A673 (cell line): ENCODE measurements at regions of chr1 and their contacts with region 1.

Region 1: GRCh38 chr1:112488141-112488540 is 20.6 kb upstream of the WNT2B start:
- DNase-seq: no peak
- H3K4me3 ChIP-seq: no peak overlapping the region
- H3K27ac ChIP-seq: no peak overlapping the region
- H3K4me1 ChIP-seq: no peaks in the 10 kb centered on the region
- H3K27me3 ChIP-seq: no peaks in the 10 kb centered on the region
- CTCF ChIP-seq: no peak

Region 2: DNA sequence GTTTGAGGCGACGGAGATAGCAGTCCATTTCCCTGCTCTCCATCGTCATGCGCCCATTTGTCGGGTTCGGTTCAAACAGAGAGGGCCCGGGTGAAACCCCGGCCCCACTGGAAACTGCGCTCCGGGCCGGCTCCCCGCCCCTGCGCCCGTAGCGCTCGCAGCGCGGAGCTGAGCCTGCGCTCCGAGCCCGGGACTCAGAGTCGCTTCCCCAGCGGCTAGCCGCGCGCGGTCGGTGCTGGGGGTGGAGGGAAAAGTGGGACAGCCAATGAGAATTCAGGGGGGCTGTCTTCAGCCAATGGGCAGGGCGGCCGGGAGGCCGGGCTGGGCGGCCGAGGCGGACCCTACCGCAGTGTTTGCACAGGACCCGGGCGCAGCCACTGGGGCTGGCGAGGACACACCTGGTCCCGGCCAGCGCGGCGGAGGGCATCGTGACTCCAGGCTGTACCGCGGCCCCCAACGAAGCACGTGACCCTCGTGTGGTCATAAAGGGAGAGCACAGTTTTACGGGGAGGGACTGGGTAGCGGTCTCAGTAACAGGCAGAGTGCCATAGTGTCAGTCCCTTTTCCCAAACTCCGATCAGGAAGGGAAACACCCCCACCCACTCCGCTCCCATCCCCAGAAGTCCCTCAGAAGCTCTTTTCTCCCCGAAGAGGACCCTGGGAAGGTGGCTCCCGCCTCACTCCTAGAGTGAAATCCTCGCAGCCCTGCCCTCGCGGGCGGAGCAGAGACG is 748.8 kb before region 1 on chr1 and contains the start of gene INKA2:
- CTCF ChIA-PET with region 1: no interaction called
- POLR2A ChIA-PET with region 1: no interaction called
- intact Hi-C with region 1: no loop called
- DNase-seq: peak; percentile 89
- H3K4me3 ChIP-seq: peak within 1 kb of the TSS; percentile 59
- H3K27ac ChIP-seq: peak within 1 kb of the TSS; percentile 70
- H3K4me1 ChIP-seq: peaks cover 37% of the 10 kb centered on the region
- H3K27me3 ChIP-seq: peaks cover 14% of the 10 kb centered on the region
- CTCF ChIP-seq: no peak
- total RNA-seq, gene INKA2: 0.62 and 0.74 TPM in 2 replicates

Region 3: GRCh38 chr1:112700290-112701226 is 212.4 kb after region 1 on chr1:
- CTCF ChIA-PET with region 1: no interaction called
- POLR2A ChIA-PET with region 1: interaction called, 10 read pairs
- intact Hi-C with region 1: no loop called
- DNase-seq: peak; percentile 94
- H3K4me3 ChIP-seq: no peak overlapping the region
- H3K27ac ChIP-seq: peak overlapping the region; percentile 78
- H3K4me1 ChIP-seq: peaks cover 36% of the 10 kb centered on the region
- H3K27me3 ChIP-seq: no peaks in the 10 kb centered on the region
- CTCF ChIP-seq: no peak